ENCODE measurements at regions of chr1 and their contacts with region 1.

Region 1: GRCh38 chr1:112706908-112707663 is at the start of gene RHOC:
- DNase-seq: peak; percentile 93
- H3K4me3 ChIP-seq: peak within 1 kb of the TSS; percentile 92 to 96
- H3K27ac ChIP-seq: peak within 1 kb of the TSS; percentile 97 to 98
- H3K4me1 ChIP-seq: peaks cover 41% of the 10 kb centered on the region
- H3K27me3 ChIP-seq: no peaks in the 10 kb centered on the region
- CTCF ChIP-seq: peak; percentile 81 to 90 (median 89)
- POLR2A ChIP-seq: peak; percentile 80
- total RNA-seq, gene RHOC: 191 to 294 TPM

Region 2: DNA sequence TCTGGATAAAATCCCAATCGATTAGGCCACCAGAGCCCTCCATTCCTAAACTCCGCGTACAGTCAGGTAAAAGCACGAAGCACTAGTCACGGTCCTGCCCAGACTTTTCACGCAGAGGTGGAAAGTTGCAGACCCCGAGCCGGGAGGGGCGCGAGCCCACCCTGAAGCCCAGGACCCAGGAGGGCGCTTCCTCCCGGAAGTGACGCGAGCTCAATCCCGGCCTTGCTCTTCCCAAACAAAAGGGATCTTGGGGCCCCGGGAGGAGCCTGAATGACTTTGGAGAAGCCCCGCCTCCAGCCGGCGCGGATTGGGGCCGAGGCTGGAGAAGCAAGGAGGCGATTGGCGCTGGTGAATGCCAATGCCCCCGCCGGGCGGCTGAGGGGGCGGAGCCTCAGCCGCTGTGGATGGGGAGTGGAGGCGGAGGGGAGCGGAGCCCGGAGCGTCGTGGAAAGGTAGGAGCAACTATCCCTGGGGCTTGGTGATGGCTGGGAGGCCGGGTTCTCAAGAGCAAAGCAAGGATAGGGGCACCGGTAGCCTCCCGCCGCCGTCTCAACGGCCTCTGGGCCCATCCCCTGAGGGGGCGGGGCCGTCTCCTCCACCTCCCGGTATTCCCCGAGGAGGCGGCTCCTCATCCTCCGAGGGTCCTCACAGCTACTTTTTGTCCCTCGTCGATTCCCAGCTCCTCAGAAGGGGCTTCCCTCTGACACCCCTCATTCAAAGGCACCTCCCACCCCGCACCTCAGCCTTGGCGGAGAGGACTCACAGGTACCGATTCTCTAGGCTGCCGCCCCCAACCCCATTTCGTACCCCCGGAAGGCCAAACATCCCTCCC is 311.0 kb before region 1 on chr1 and contains the start of gene CTTNBP2NL:
- intact Hi-C with region 1: loop called (anchors 5 kb)
- DNase-seq: peak; percentile 99
- H3K4me3 ChIP-seq: peak within 1 kb of the TSS; percentile 92 to 98
- H3K27ac ChIP-seq: peak within 1 kb of the TSS; percentile 86 to 87
- H3K4me1 ChIP-seq: peaks cover 17% of the 10 kb centered on the region
- H3K27me3 ChIP-seq: no peaks in the 10 kb centered on the region
- CTCF ChIP-seq: no peak
- POLR2A ChIP-seq: no peak
- total RNA-seq, gene CTTNBP2NL: 16.3 to 19.4 TPM

Region 3: GRCh38 chr1:112501810-112502641 is 205.1 kb before region 1 on chr1:
- intact Hi-C with region 1: loop called (anchors 5 kb)
- DNase-seq: peak; percentile 86
- H3K4me3 ChIP-seq: peak overlapping the region; percentile 41 to 69
- H3K27ac ChIP-seq: peak overlapping the region; percentile 12 to 68
- H3K4me1 ChIP-seq: peaks cover 44% of the 10 kb centered on the region
- H3K27me3 ChIP-seq: no peaks in the 10 kb centered on the region
- CTCF ChIP-seq: peak; percentile 52 to 72 (median 71)
- POLR2A ChIP-seq: no peak

Region 4: DNA sequence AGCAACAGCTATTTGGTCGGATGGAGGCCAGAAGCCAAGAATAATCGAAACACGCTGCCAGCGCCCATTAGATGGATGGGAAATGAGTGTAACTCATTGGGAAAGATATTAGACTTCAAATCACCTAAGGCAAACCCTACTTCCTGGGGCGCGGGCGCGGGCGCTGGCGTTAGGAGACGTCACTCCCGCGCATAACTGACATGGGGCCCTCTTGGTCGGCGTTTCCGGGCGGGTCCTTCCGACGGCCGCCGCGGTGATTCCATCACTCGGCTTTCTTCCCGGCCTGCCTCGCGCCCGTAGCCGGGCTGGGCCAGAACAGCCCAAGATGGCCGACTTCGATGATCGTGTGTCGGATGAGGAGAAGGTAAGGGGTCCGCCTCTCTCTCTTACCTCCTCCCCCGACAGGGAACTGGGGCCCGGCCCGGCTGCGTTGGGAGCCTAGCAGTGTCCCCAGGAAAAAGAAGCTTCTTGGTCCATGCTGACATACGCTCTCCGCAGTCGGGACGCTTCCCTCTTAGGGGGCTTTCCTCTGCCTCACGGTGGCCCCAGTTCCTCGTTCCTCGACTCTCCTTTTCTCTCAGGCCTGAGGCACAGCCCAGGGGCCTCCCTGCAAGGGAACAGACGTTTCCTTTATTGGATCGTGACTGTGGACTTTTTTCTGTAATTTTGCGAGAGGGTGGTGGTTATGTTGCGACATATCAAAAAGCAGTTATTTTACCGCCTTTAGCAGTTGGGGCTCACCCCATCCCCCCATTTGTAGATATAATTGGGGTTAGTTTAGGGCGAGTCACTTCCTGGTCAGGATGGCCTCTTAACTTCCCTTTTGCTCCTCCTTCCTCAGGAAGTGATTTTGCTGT is 87.3 kb before region 1 on chr1 and contains the start of gene CAPZA1:
- intact Hi-C with region 1: loop called (anchors 2 kb)
- DNase-seq: peak; percentile 95
- H3K4me3 ChIP-seq: peak within 1 kb of the TSS; percentile 81 to 87
- H3K27ac ChIP-seq: peak within 1 kb of the TSS; percentile 95 to 97
- H3K4me1 ChIP-seq: peaks cover 22% of the 10 kb centered on the region
- H3K27me3 ChIP-seq: no peaks in the 10 kb centered on the region
- CTCF ChIP-seq: no peak
- POLR2A ChIP-seq: no peak
- total RNA-seq, gene CAPZA1: 144 to 148 TPM

Region 5: GRCh38 chr1:112769611-112770010 is 62.5 kb after region 1 on chr1:
- intact Hi-C with region 1: no loop called
- DNase-seq: no peak
- H3K4me3 ChIP-seq: no peak overlapping the region
- H3K27ac ChIP-seq: no peak overlapping the region
- H3K4me1 ChIP-seq: no peaks in the 10 kb centered on the region
- H3K27me3 ChIP-seq: no peaks in the 10 kb centered on the region
- CTCF ChIP-seq: no peak
- POLR2A ChIP-seq: no peak